ENCODE measurements at regions of chr7 and their contacts with region 1.

Region 1: GRCh38 chr7:8134089-8134733 is 127.8 kb downstream of the ICA1 start:
- DNase-seq: peak; percentile 71
- H3K4me3 Mint-ChIP-seq: peak overlapping the region; percentile 33
- H3K27ac Mint-ChIP-seq: peak overlapping the region; percentile 68
- H3K4me1 Mint-ChIP-seq: peaks cover 52% of the 10 kb centered on the region
- H3K27me3 Mint-ChIP-seq: no peaks in the 10 kb centered on the region

Region 2: DNA sequence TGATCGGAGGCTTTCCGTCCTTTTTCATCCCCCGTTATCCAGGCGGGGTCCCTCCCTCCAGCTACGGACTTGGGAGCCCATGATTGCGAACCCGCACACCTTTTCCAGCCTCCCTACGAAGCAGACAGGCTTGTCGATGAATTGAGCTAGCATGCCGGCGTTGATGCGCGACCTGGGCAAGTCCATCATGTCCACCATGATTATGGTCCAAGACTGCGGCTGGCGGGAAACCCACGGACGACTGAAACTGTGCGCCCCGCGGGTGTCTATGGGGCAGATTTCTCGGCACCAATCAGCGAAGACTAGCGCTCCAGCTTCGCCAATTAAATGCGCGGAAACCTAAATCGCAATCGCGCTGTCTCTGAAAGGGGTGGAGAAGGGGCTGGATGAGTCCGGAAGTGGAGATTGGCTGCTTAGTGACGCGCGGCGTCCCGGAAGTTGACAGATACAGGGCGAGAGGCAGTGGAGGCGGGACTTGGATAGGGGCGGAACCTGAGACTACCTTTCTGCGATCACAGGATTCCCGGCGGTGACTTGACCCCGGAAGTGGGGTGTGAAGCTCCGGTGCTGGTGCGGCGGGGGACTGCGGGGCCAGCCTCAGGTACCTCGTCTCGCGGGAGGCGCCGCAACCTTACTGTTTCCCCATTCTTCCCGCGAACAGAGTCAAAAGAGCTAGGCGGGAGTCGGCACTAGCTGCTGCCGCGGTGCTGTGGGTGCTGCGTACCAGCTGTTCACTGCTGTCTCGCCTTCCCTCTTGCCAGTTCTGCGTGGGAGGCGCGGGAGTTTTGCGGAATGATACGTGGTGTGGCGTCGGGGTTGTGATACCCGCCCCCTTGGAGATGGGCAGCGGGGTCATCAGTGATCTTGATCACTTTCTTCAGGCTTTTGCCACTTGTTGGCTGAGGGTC is 493.7 kb before region 1 on chr7 and contains the start of gene UMAD1:
- CTCF ChIA-PET with region 1: no interaction called
- intact Hi-C with region 1: loop called (anchors 1 kb)
- DNase-seq: peak; percentile 99
- H3K4me3 Mint-ChIP-seq: peak within 1 kb of the TSS; percentile 92
- H3K27ac Mint-ChIP-seq: peak within 1 kb of the TSS; percentile 98
- H3K4me1 Mint-ChIP-seq: peaks cover 41% of the 10 kb centered on the region
- H3K27me3 Mint-ChIP-seq: no peaks in the 10 kb centered on the region
- total RNA-seq, gene UMAD1: 13.8 to 14.3 TPM

Region 3: GRCh38 chr7:7772397-7772821 is 361.8 kb before region 1 on chr7:
- CTCF ChIA-PET with region 1: no interaction called
- intact Hi-C with region 1: loop called (anchors 1 kb)
- DNase-seq: peak; percentile 53
- H3K4me3 Mint-ChIP-seq: peak overlapping the region; percentile 69
- H3K27ac Mint-ChIP-seq: no peak overlapping the region
- H3K4me1 Mint-ChIP-seq: peaks cover 28% of the 10 kb centered on the region
- H3K27me3 Mint-ChIP-seq: no peaks in the 10 kb centered on the region

Region 4: DNA sequence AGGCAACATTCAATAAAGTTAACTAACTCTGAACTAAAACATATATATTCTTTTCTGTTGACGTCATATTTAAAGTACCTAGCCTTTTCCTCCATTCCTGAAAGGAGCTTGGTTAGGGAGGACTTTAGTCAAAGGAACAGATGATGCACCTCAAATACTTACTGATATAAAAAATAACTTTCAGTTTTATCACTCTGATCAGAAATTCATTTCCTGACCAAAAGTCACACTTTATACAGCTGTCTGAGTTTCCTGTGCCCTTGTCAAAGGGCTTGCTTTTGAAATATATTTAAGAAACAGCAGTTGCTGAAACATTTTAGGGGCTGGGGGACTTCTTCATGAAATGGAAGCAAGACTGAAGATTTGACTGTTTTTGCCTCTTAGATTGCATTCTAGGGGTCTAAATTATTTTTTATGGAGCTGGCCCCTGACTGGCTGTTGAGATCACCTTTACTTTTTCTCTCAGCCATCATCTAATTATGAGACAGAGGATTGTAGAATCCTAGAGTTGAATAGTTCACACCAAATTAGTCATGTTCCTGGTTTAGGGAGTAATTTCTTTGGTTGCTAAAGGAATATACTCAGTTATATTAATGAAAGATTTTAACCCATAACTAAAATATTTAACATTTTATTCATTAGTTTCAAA is 119.0 kb before region 1 on chr7:
- CTCF ChIA-PET with region 1: no interaction called
- intact Hi-C with region 1: loop called (anchors 1 kb)
- DNase-seq: no peak
- H3K4me3 Mint-ChIP-seq: peak overlapping the region; percentile 4
- H3K27ac Mint-ChIP-seq: peak overlapping the region; percentile 68
- H3K4me1 Mint-ChIP-seq: peaks cover 47% of the 10 kb centered on the region
- H3K27me3 Mint-ChIP-seq: no peaks in the 10 kb centered on the region

Region 5: GRCh38 chr7:8051373-8051772 is 82.8 kb before region 1 on chr7:
- CTCF ChIA-PET with region 1: no interaction called
- intact Hi-C with region 1: no loop called
- DNase-seq: no peak
- H3K4me3 Mint-ChIP-seq: no peak overlapping the region
- H3K27ac Mint-ChIP-seq: no peak overlapping the region
- H3K4me1 Mint-ChIP-seq: peaks cover 34% of the 10 kb centered on the region
- H3K27me3 Mint-ChIP-seq: no peaks in the 10 kb centered on the region

Region 6: DNA sequence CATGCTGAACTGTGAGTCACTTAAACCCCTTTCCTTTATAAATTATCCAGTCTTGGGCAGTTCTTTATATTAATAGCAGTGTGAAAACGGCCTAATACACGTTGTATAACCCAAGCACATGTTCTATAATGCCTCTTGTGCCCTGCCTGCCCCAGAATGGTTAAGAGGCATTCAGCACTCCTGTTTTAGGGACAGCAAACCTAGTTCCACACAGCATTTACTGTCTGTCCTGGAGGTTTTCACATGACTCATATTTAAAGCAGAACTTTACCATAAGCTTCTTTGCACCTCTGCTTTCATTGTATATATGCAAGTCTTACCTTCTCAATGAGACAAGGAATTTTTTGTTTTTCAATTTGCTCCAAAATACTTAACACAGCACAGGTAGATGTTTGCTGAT is 17.0 kb before region 1 on chr7:
- CTCF ChIA-PET with region 1: interaction called, 3 read pairs
- intact Hi-C with region 1: loop called (anchors 1 kb)
- DNase-seq: no peak
- H3K4me3 Mint-ChIP-seq: no peak overlapping the region
- H3K27ac Mint-ChIP-seq: no peak overlapping the region
- H3K4me1 Mint-ChIP-seq: peaks cover 46% of the 10 kb centered on the region
- H3K27me3 Mint-ChIP-seq: no peaks in the 10 kb centered on the region

Region 7: DNA sequence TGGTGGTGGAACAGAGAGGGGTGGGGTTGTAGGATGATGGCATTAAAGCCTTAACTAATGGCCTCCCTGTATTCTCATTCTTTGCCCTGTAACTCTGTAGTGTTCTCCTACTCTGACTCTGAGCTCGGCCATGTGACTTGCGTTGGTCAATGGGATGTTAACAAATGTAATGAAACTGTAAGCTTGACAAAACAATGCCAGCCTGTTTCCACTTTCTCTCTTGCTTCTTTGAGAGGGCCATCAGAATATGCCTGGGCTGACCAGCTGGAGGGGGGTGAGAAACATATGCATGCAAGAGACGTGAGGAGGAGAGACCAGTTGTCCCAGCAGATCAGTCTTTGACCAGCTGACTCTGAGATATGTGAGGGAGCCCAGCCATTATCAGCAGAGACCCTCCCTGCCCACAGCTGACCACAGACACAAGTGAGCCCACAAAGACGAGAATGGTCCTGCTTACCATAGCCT is 27.2 kb after region 1 on chr7:
- CTCF ChIA-PET with region 1: no interaction called
- intact Hi-C with region 1: no loop called
- DNase-seq: no peak
- H3K4me3 Mint-ChIP-seq: no peak overlapping the region
- H3K27ac Mint-ChIP-seq: no peak overlapping the region
- H3K4me1 Mint-ChIP-seq: no peaks in the 10 kb centered on the region
- H3K27me3 Mint-ChIP-seq: no peaks in the 10 kb centered on the region

Region 8: DNA sequence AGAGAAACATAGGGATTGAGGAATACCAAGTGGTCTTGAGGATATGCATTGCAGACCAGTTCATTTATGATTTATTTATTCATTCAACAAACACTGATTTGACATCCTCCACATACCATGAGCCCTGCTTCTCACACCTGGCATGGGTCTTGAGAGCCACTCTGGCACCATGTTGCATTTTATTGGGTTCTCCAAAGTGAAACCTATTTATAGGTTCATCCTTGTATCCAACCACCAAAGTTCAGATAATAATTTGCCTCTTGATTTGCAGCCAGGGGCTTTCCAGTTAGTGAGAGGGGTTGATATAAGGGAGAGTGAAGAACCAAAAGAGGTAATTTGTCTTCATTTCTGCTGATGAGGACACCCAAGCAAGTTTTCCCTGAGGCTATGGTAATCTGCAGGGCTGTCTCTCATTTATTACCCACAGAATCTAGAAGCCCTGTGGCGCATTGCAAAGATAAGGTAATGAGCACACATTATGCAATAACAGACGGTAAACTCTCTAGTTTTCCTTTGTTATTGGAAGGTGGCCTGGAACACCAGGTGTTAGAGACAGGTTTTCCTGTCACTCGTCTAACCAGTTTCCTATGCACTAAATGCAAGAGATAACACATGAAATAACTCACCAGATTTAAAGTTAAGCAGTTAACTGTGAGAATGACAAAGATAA is 156.6 kb after region 1 on chr7:
- CTCF ChIA-PET with region 1: no interaction called
- intact Hi-C with region 1: no loop called
- DNase-seq: no peak
- H3K4me3 Mint-ChIP-seq: no peak overlapping the region
- H3K27ac Mint-ChIP-seq: no peak overlapping the region
- H3K4me1 Mint-ChIP-seq: peaks cover 1% of the 10 kb centered on the region
- H3K27me3 Mint-ChIP-seq: peaks cover 5% of the 10 kb centered on the region

Region 9: GRCh38 chr7:8343556-8343955 is 209.3 kb after region 1 on chr7:
- CTCF ChIA-PET with region 1: no interaction called
- intact Hi-C with region 1: no loop called
- DNase-seq: no peak
- H3K4me3 Mint-ChIP-seq: no peak overlapping the region
- H3K27ac Mint-ChIP-seq: no peak overlapping the region
- H3K4me1 Mint-ChIP-seq: no peaks in the 10 kb centered on the region
- H3K27me3 Mint-ChIP-seq: peaks cover 4% of the 10 kb centered on the region

Measured in activated naive CD4-positive, alpha-beta T cell treated with anti-CD3 and anti-CD28 coated beads for 36 hours (primary cell).